ENCODE measurements at regions of chr20 and their contacts with region 1.

Region 1: DNA sequence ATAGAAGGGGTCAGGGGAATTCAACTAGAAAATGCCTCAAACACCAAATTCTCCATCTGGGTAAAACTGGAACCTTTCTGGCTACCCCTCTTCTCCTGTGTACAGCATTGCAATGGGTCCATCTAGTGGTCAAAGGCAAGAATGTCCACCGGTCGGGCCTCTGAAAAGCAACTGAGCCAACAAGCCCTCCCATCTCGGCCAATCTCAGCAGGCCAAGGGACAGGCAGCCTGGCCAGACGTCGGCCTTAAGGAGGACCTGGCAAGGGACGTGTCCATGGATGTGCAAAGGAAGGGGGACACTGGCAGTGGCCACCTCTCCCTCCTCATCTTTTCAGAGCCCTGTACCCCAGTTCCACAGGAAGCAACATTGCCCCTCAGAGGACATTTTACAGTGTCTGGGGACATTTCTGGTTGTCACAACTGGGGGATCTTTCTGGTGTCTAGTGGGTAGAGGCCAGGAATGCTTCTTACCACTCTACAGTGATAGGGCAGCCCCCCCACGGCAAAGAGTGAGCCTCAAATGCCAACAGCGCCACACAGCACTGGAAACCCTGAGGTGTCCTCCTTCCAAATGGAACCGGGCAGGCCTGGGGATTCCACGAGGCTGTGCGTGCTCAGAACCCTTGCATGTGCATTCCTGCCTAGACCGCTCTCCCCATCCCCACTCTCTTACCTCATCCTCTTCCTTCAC is 99.8 kb upstream of the FOXA2 start:
- DNase-seq: no peak
- ATAC-seq: peak; percentile 89
- H3K4me3 ChIP-seq: no peak overlapping the region
- H3K27ac ChIP-seq: no peak overlapping the region
- H3K4me1 ChIP-seq: no peaks in the 10 kb centered on the region
- H3K27me3 ChIP-seq: no peaks in the 10 kb centered on the region
- CTCF ChIP-seq: peak; percentile 86

Region 2: DNA sequence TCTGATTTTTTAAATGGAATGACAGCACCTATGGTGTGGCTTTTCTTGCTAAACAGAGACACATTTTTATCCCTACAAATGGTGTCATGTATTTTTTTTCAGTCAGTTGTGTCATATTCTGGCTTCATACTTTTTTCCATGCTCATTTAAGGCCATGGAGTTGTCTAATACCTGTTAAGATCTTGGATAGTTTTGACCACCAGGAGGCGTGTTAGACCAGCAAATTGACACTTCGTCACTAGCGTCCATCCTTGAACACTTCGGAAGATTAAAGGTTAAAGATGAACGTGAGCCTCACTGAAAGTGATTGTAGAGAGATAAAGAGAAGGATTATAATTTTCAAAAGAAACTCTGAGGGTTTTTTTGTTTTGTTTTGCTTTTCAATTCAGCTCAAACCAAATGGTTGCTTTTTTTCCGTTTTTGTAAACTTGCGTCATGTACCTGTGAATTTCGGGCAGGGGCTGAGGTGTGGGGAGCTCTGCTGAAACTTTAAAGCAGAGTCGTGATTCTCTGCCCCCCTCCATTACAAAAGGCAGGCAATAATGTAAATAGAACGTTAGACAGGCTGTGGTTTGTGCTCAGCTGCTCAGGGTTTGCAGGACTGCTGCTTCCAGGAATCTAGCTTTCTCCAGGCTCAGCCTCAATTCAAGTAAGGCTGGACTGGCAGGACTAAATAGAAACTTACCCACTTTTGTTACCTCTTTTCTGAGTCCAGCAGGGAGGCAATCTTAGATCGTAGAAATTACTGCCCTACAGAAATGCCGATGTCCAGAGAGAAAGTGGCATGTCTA is 344.9 kb before region 1 on chr20:
- intact Hi-C with region 1: loop called (anchors 5 kb)
- DNase-seq: no peak
- ATAC-seq: peak; percentile 80
- H3K4me3 ChIP-seq: no peak overlapping the region
- H3K27ac ChIP-seq: no peak overlapping the region
- H3K4me1 ChIP-seq: no peaks in the 10 kb centered on the region
- H3K27me3 ChIP-seq: no peaks in the 10 kb centered on the region
- CTCF ChIP-seq: peak; percentile 69

Region 3: GRCh38 chr20:22617160-22617559 is 67.1 kb before region 1 on chr20:
- intact Hi-C with region 1: no loop called
- DNase-seq: peak; percentile 66
- ATAC-seq: peak; percentile 93
- H3K4me3 ChIP-seq: no peak overlapping the region
- H3K27ac ChIP-seq: no peak overlapping the region
- H3K4me1 ChIP-seq: no peaks in the 10 kb centered on the region
- H3K27me3 ChIP-seq: peaks cover 12% of the 10 kb centered on the region
- CTCF ChIP-seq: no peak

Region 4: GRCh38 chr20:23027721-23028120 is 343.5 kb after region 1 on chr20:
- intact Hi-C with region 1: no loop called
- DNase-seq: no peak
- ATAC-seq: peak; percentile 73
- H3K4me3 ChIP-seq: no peak overlapping the region
- H3K27ac ChIP-seq: no peak overlapping the region
- H3K4me1 ChIP-seq: peaks cover 3% of the 10 kb centered on the region
- H3K27me3 ChIP-seq: no peaks in the 10 kb centered on the region
- CTCF ChIP-seq: no peak